Activated CD8-positive, alpha-beta T cell treated with anti-CD3 and anti-CD28 coated beads for 36 hours (primary cell): ENCODE measurements at regions of chr13 and their contacts with region 1.

Region 1: GRCh38 chr13:42354241-42355091 is 82.5 kb downstream of the AKAP11 start:
- DNase-seq: peak; percentile 68
- ATAC-seq: peak; percentile 65
- H3K4me3 Mint-ChIP-seq: peak overlapping the region; percentile 70
- H3K27ac Mint-ChIP-seq: peak overlapping the region; percentile 97
- H3K4me1 Mint-ChIP-seq: peaks cover 69% of the 10 kb centered on the region
- H3K27me3 Mint-ChIP-seq: no peaks in the 10 kb centered on the region
- CTCF ChIP-seq: peak; percentile 35

Region 2: DNA sequence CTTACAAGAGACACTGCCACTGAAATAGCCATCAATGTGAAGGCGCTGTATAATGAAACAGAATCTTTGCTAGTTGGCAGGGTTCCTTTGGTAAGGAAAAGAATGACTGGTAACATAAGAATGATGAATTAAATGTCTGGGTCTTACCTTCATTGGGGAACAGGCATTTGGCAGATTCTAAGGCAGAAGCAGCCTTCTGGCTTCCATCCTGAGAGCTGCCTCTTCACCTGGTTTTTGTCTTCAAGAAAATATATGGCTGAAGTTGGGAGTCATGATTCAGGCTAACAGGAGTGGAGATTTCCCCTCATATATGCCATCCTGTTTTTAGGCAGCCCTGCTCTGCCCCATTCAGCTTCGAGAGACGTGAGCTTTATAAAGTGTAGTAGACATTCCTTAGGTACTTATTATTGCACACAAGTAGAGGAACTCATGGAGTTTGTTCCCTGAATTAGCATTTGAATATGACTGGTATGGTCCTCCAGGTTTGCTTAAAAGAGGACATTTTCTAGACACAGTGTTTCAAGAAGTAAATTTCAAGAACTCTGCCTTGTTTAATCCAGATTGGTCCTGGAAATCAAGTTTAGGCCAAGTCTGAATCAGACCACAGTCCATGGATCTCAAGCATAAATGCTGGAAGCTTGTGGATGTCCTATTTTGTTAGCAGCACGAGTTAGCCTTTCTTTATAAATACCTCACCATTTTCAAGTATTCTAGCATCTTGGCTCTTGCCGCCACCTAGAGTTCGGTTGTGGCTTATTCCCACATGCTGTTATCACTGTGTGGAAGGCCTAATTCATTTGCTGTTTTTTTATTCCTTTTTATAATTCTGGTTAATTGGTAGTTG is 138.7 kb before region 1 on chr13:
- CTCF ChIA-PET with region 1: no interaction called
- POLR2A ChIA-PET with region 1: no interaction called
- intact Hi-C with region 1: no loop called
- DNase-seq: peak; percentile 56
- ATAC-seq: peak; percentile 66
- H3K4me3 Mint-ChIP-seq: no peak overlapping the region
- H3K27ac Mint-ChIP-seq: no peak overlapping the region
- H3K4me1 Mint-ChIP-seq: no peaks in the 10 kb centered on the region
- H3K27me3 Mint-ChIP-seq: no peaks in the 10 kb centered on the region
- CTCF ChIP-seq: peak; percentile 30

Region 3: GRCh38 chr13:42377640-42378382 is 23.3 kb after region 1 on chr13:
- CTCF ChIA-PET with region 1: interaction called, 5 read pairs
- POLR2A ChIA-PET with region 1: interaction called, 19 read pairs
- intact Hi-C with region 1: loop called (anchors 1 kb)
- DNase-seq: peak; percentile 58
- ATAC-seq: peak; percentile 82
- H3K4me3 Mint-ChIP-seq: no peak overlapping the region
- H3K27ac Mint-ChIP-seq: peak overlapping the region; percentile 95
- H3K4me1 Mint-ChIP-seq: peaks cover 69% of the 10 kb centered on the region
- H3K27me3 Mint-ChIP-seq: no peaks in the 10 kb centered on the region
- CTCF ChIP-seq: no peak

Region 4: GRCh38 chr13:42405665-42406390 is 51.4 kb after region 1 on chr13:
- CTCF ChIA-PET with region 1: interaction called, 3 read pairs
- POLR2A ChIA-PET with region 1: interaction called, 11 read pairs
- intact Hi-C with region 1: loop called (anchors 2 kb)
- DNase-seq: peak; percentile 91
- ATAC-seq: peak; percentile 83
- H3K4me3 Mint-ChIP-seq: peak overlapping the region; percentile 33
- H3K27ac Mint-ChIP-seq: peak overlapping the region; percentile 90
- H3K4me1 Mint-ChIP-seq: peaks cover 56% of the 10 kb centered on the region
- H3K27me3 Mint-ChIP-seq: no peaks in the 10 kb centered on the region
- CTCF ChIP-seq: no peak

Region 5: GRCh38 chr13:42440191-42440550 is 85.7 kb after region 1 on chr13:
- CTCF ChIA-PET with region 1: no interaction called
- POLR2A ChIA-PET with region 1: no interaction called
- intact Hi-C with region 1: no loop called
- DNase-seq: no peak
- ATAC-seq: no peak
- H3K4me3 Mint-ChIP-seq: no peak overlapping the region
- H3K27ac Mint-ChIP-seq: no peak overlapping the region
- H3K4me1 Mint-ChIP-seq: no peaks in the 10 kb centered on the region
- H3K27me3 Mint-ChIP-seq: no peaks in the 10 kb centered on the region
- CTCF ChIP-seq: no peak

Region 6: DNA sequence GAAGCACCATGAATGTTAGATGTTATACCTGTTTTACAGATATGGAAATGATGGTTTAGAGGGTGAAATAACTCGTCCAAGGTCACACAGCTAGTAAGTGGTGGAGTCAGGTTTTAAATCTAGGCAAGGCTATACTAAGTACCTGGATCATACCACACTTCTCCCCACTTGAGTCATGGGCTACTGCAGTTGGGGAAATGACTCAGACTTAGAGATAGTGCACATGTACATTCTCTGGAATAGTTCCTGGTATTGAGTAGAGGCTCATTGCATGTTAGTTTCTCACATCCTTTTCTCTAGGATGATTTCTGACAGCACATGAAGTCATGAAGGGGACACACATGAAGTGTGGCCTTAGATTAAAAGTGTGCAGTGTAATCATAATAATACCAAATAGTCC is 143.3 kb after region 1 on chr13:
- CTCF ChIA-PET with region 1: interaction called, 4 read pairs
- POLR2A ChIA-PET with region 1: interaction called, 3 read pairs
- intact Hi-C with region 1: loop called (anchors 2 kb)
- DNase-seq: peak; percentile 53
- ATAC-seq: peak; percentile 86
- H3K4me3 Mint-ChIP-seq: no peak overlapping the region
- H3K27ac Mint-ChIP-seq: peak overlapping the region; percentile 44
- H3K4me1 Mint-ChIP-seq: peaks cover 46% of the 10 kb centered on the region
- H3K27me3 Mint-ChIP-seq: no peaks in the 10 kb centered on the region
- CTCF ChIP-seq: no peak

Region 7: DNA sequence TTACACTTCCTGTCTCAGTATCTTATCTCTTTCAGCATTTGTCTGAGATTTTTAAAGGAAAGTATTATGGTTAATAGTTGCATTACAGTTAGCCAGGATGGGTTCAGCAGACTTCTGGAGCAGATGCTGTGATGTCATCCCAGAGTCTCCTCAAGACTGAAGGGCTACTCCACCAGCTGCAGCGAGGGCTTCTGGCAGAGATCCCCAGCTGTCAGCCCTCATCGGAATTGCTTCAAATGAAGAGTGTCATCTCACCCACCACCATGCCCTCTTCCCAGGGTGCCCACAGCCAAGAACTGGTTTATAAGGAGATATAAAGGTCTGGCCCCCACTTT is 511.3 kb after region 1 on chr13:
- CTCF ChIA-PET with region 1: no interaction called
- POLR2A ChIA-PET with region 1: no interaction called
- intact Hi-C with region 1: no loop called
- DNase-seq: no peak
- ATAC-seq: no peak
- H3K4me3 Mint-ChIP-seq: no peak overlapping the region
- H3K27ac Mint-ChIP-seq: no peak overlapping the region
- H3K4me1 Mint-ChIP-seq: no peaks in the 10 kb centered on the region
- H3K27me3 Mint-ChIP-seq: peaks cover 6% of the 10 kb centered on the region
- CTCF ChIP-seq: no peak